Caco-2 (cell line): ENCODE measurements at regions of chr17 and their contacts with region 1.

Region 1: DNA sequence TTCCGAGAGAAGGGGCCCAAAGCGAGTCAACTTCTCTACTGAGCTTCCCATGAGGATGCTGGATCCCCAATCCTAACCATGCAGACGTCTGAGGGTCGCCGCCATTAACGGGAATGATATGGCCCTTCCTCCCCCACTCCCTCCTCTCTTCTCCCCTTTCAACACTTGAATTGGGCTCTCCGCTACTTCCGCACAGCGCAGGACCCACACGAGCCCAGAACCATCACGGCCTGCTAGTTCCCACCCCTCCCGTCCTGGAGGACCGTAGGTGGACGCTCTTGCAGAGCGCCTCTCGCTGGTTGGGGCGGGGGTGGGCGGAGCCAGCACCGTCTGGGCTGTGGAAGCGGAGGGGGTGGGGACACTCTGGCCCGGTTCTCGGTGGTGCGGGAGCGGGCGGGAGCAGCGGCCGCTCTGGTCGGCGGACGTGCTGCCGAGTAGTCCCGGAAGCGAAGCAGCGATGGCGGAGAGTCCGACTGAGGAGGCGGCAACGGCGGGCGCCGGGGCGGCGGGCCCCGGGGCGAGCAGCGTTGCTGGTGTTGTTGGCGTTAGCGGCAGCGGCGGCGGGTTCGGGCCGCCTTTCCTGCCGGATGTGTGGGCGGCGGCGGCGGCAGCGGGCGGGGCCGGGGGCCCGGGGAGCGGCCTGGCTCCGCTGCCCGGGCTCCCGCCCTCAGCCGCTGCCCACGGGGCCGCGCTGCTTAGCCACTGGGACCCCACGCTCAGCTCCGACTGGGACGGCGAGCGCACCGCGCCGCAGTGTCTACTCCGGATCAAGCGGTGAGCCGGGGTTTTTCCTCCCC is at the start of gene UBE2Z:
- DNase-seq: peak; percentile 99
- H3K4me3 ChIP-seq: peak within 1 kb of the TSS; percentile 94
- H3K4me3 Mint-ChIP-seq: peak within 1 kb of the TSS; percentile 89
- H3K27ac Mint-ChIP-seq: peak within 1 kb of the TSS; percentile 95
- H3K4me1 ChIP-seq: peaks cover 26% of the 10 kb centered on the region
- H3K4me1 Mint-ChIP-seq: peaks cover 37% of the 10 kb centered on the region
- H3K27me3 ChIP-seq: no peaks in the 10 kb centered on the region
- H3K27me3 Mint-ChIP-seq: no peaks in the 10 kb centered on the region
- CTCF ChIP-seq: peak in 1 of 2 experiments; percentile 68
- total RNA-seq, gene UBE2Z: 182 and 187 TPM in 2 replicates

Region 2: DNA sequence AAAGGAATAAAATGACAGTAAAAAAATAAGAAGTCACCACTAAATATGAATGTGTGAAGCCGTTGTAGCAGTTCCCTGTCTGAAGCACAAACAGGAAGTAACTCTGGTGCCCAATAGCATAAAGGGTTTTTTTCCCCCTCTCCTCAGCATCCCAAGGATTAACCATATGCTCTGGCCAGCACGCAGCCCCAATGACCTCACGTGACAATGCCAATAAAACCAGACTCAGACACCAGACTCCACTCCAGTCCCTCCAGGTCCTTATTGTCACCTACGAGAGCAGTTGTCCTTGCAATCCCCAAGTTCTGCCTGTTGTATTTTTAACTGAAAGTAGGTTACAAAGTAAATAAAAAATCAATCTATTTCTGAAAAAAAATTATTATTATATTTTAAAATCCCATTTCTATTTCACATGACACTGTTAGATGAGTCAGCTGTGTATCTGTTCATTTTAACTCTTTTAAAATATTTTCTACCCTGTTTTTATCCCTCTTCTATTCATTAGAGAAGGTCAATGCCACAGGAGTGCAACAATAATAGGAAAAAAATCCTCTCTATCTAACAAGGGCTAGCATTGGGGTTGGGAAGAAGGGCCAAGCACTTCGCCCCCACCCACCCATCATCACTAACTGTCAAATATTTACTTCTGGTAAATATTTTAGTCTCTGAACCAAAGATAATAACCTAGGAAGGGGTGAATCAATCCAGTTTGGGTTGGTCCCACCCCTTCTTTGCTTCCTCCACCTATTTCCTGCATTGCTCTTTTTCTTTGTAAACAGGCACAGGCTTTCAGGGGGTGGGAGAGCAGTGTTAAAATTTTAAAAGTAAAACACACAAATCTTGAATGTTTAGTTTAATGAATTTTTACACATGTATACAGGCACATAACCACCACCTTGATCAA is 192.5 kb before region 1 on chr17:
- CTCF ChIA-PET with region 1: no interaction called
- POLR2A ChIA-PET with region 1: no interaction called
- intact Hi-C with region 1: no loop called
- DNase-seq: peak in 1 of 2 experiments; percentile 43
- H3K4me3 ChIP-seq: no peak overlapping the region
- H3K4me3 Mint-ChIP-seq: no peak overlapping the region
- H3K27ac Mint-ChIP-seq: no peak overlapping the region
- H3K4me1 ChIP-seq: peaks cover 6% of the 10 kb centered on the region
- H3K4me1 Mint-ChIP-seq: no peaks in the 10 kb centered on the region
- H3K27me3 ChIP-seq: no peaks in the 10 kb centered on the region; the same call in none of the 2 replicates
- H3K27me3 Mint-ChIP-seq: no peaks in the 10 kb centered on the region
- CTCF ChIP-seq: no peak

Region 3: GRCh38 chr17:48830840-48831548 is 77.3 kb before region 1 on chr17 and contains the start of gene CALCOCO2:
- CTCF ChIA-PET with region 1: no interaction called
- POLR2A ChIA-PET with region 1: no interaction called
- intact Hi-C with region 1: no loop called
- DNase-seq: peak; percentile 99 to 100
- H3K4me3 ChIP-seq: peak within 1 kb of the TSS; percentile 89
- H3K4me3 Mint-ChIP-seq: peak within 1 kb of the TSS; percentile 99
- H3K27ac Mint-ChIP-seq: peak within 1 kb of the TSS; percentile 99
- H3K4me1 ChIP-seq: peaks cover 10% of the 10 kb centered on the region
- H3K4me1 Mint-ChIP-seq: no peaks in the 10 kb centered on the region
- H3K27me3 ChIP-seq: no peaks in the 10 kb centered on the region
- H3K27me3 Mint-ChIP-seq: no peaks in the 10 kb centered on the region
- CTCF ChIP-seq: peak in 1 of 2 experiments; percentile 24
- total RNA-seq, gene CALCOCO2: 233 and 251 TPM in 2 replicates

Region 4: GRCh38 chr17:48892940-48893645 is 15.2 kb before region 1 on chr17:
- CTCF ChIA-PET with region 1: interaction called, 21 read pairs
- POLR2A ChIA-PET with region 1: interaction called, 64 read pairs
- intact Hi-C with region 1: loop called (anchors 1 kb)
- DNase-seq: no peak
- H3K4me3 ChIP-seq: peak overlapping the region; percentile 73
- H3K4me3 Mint-ChIP-seq: peak overlapping the region; percentile 84
- H3K27ac Mint-ChIP-seq: peak overlapping the region; percentile 90
- H3K4me1 ChIP-seq: peaks cover 13% of the 10 kb centered on the region
- H3K4me1 Mint-ChIP-seq: peaks cover 12% of the 10 kb centered on the region
- H3K27me3 ChIP-seq: no peaks in the 10 kb centered on the region
- H3K27me3 Mint-ChIP-seq: peaks cover 2% of the 10 kb centered on the region
- CTCF ChIP-seq: no peak

Region 5: DNA sequence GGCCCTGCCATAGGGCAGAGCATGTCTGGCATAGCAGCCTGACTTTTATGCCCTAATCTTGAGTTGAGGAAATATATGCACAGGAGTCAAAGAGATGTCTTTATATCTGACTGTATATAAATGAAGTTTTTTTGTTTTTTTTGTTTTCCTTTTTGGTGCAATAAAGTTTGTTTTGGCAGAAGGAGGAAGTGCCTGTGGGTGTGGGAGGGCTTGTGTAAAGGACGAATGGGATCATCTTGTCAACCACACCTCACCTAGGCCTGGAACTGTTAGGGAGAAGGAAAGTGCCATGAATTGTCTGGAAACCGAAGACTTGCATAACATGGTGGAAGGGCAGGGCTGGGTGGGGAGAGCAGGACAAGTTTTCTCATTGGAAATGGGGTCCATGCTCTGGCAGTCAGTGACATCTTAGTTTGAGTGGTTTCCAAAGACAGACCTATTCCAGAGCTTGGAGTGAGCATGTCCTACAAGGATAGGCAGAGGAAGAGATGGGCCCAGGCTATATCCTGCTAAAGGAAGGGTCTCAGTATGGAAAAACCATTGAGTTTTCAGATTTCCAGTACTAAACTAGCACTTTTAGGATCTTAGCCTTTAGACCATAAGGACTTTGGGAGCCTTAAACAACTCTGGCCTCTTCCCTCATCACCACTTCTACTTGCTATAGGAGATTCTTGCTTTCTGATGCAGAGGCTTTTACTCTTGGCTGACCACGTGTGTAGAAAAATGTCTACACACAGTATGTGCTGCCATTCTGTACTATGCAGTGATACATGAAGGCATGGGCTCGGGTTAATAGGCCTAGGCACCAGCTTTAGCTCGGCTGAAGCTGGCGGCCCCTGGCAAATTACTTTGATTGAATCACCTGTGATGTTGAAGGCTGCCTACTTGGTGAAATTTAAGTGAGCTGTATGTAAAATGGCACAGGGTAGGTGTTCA is 20.9 kb after region 1 on chr17:
- CTCF ChIA-PET with region 1: interaction called, 5 read pairs
- POLR2A ChIA-PET with region 1: interaction called, 18 read pairs
- intact Hi-C with region 1: no loop called
- DNase-seq: no peak
- H3K4me3 ChIP-seq: no peak overlapping the region
- H3K4me3 Mint-ChIP-seq: no peak overlapping the region
- H3K27ac Mint-ChIP-seq: no peak overlapping the region
- H3K4me1 ChIP-seq: no peaks in the 10 kb centered on the region
- H3K4me1 Mint-ChIP-seq: no peaks in the 10 kb centered on the region
- H3K27me3 ChIP-seq: no peaks in the 10 kb centered on the region
- H3K27me3 Mint-ChIP-seq: no peaks in the 10 kb centered on the region
- CTCF ChIP-seq: no peak

Region 6: DNA sequence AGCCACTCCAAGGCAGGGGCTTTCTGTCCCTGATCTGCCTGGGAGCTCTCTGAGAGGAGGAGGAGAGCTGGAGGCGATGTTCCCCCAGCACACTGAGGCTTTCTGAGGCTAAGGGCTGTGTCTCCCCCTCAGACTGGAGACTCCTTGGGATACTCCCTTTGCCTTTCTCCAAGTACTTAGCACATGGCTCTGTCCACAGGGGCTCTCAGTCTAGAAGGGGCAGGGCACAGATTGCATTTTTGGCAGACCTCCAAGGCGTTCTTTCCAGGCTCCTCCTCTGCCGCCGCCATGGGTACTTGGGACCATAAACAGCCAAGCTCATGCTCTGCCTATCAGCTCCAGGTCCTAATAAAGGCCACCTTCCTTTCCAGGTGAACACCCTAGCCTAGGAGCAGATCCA is 62.0 kb after region 1 on chr17:
- CTCF ChIA-PET with region 1: no interaction called
- POLR2A ChIA-PET with region 1: no interaction called
- intact Hi-C with region 1: loop called (anchors 2 kb)
- DNase-seq: peak in 1 of 2 experiments; percentile 43
- H3K4me3 ChIP-seq: no peak overlapping the region
- H3K4me3 Mint-ChIP-seq: no peak overlapping the region
- H3K27ac Mint-ChIP-seq: peak overlapping the region; percentile 97
- H3K4me1 ChIP-seq: peaks cover 38% of the 10 kb centered on the region
- H3K4me1 Mint-ChIP-seq: peaks cover 46% of the 10 kb centered on the region
- H3K27me3 ChIP-seq: no peaks in the 10 kb centered on the region
- H3K27me3 Mint-ChIP-seq: no peaks in the 10 kb centered on the region
- CTCF ChIP-seq: no peak

Region 7: GRCh38 chr17:49132699-49133364 is 224.6 kb after region 1 on chr17 and contains the start of gene B4GALNT2:
- CTCF ChIA-PET with region 1: no interaction called
- POLR2A ChIA-PET with region 1: no interaction called
- intact Hi-C with region 1: no loop called
- DNase-seq: peak; percentile 79
- H3K4me3 ChIP-seq: peak within 1 kb of the TSS; percentile 58
- H3K4me3 Mint-ChIP-seq: peak within 1 kb of the TSS; percentile 84
- H3K27ac Mint-ChIP-seq: peak within 1 kb of the TSS; percentile 50
- H3K4me1 ChIP-seq: peaks cover 6% of the 10 kb centered on the region; the same call in 1 of the 2 replicates
- H3K4me1 Mint-ChIP-seq: peaks cover 8% of the 10 kb centered on the region
- H3K27me3 ChIP-seq: peaks cover 2% of the 10 kb centered on the region; the same call in 1 of the 2 replicates
- H3K27me3 Mint-ChIP-seq: no peaks in the 10 kb centered on the region
- CTCF ChIP-seq: no peak
- total RNA-seq, gene B4GALNT2: 1.1 and 1.3 TPM in 2 replicates

Region 8: GRCh38 chr17:49365667-49366066 is 457.4 kb after region 1 on chr17:
- CTCF ChIA-PET with region 1: no interaction called
- POLR2A ChIA-PET with region 1: no interaction called
- intact Hi-C with region 1: no loop called
- DNase-seq: peak; percentile 69 to 71
- H3K4me3 ChIP-seq: no peak overlapping the region
- H3K4me3 Mint-ChIP-seq: no peak overlapping the region
- H3K27ac Mint-ChIP-seq: no peak overlapping the region
- H3K4me1 ChIP-seq: peaks cover 9% of the 10 kb centered on the region
- H3K4me1 Mint-ChIP-seq: peaks cover 9% of the 10 kb centered on the region
- H3K27me3 ChIP-seq: no peaks in the 10 kb centered on the region
- H3K27me3 Mint-ChIP-seq: no peaks in the 10 kb centered on the region
- CTCF ChIP-seq: peak; percentile 22 to 66